Posterior vena cava (tissue), 2 donors: ENCODE measurements at regions of chr7 and their contacts with region 1.

Region 1: GRCh38 chr7:151139071-151139790 is 28.3 kb downstream of the GBX1 start:
- DNase-seq: peak; percentile 64

Region 2: GRCh38 chr7:149832332-149833041 is 1306.7 kb before region 1 on chr7:
- intact Hi-C with region 1: no loop called
- DNase-seq: peak; percentile 62

Region 3: DNA sequence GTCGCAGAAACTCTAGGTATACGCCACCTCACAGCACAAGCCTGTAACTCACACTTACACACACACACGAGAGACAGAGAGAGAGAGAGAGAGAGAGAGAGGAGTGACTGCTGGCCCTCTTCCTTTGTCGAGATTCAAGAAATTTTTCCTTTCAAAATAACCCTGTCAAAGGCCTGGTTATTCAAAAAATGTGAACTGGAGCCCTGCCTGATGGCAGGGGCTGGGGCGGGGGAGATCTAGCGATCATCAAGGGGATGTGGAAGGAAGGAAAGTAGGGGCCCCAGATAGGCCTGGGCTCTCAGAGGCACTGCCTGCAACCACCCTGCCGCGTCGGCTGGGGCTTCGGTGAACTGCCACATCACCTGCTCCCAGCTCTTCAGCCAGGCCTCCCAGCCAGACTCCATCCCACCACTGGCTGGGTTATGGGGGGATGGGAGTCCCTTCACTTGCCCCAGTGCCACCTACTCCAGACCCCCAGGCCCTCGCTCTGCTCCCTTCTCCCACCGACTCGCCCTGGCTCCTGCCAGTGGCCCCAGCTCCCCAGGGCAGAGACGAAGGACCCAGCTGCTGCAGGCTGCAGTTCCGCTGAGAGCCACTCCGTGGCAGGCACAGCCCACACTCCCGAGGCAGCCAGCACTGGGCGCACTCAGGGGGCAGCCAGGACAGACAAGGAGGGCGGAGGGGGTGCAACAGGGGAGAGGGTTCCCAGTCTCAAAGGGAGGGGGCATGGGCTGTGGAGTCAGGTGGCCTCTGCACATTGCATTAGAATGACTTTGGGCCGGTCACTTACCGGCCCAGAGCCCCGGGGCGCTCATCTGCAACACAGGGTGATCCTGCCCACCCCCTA is 176.5 kb before region 1 on chr7:
- intact Hi-C with region 1: no loop called
- DNase-seq: no peak

Region 4: GRCh38 chr7:151157645-151158329 is 18.6 kb after region 1 on chr7:
- intact Hi-C with region 1: loop called in 1 of 2 experiments (anchors 1 kb)
- DNase-seq: no peak

Region 5: GRCh38 chr7:151210087-151210854 is 71.0 kb after region 1 on chr7 and contains the start of gene H2BK1:
- intact Hi-C with region 1: loop called in 1 of 2 experiments (anchors 10 kb)
- DNase-seq: peak; percentile 62
- total RNA-seq, gene H2BK1: 1.1 TPM in 1 of 2 donors, not detected in the other